Activated CD4-positive, alpha-beta T cell treated with anti-CD3 and anti-CD28 coated beads, Interleukin-2, amount 10 ng/mL, durations not matched to agents 24 days and 14 days (primary cell): ENCODE measurements at regions of chr1 and their contacts with region 1.

Region 1: GRCh38 chr1:236103646-236104218 is 38.6 kb upstream of the GPR137B start:
- DNase-seq: peak; percentile 88
- H3K4me3 Mint-ChIP-seq: no peak overlapping the region
- H3K27ac Mint-ChIP-seq: no peak overlapping the region
- H3K4me1 Mint-ChIP-seq: peaks cover 8% of the 10 kb centered on the region
- H3K27me3 Mint-ChIP-seq: peaks cover 4% of the 10 kb centered on the region

Region 2: DNA sequence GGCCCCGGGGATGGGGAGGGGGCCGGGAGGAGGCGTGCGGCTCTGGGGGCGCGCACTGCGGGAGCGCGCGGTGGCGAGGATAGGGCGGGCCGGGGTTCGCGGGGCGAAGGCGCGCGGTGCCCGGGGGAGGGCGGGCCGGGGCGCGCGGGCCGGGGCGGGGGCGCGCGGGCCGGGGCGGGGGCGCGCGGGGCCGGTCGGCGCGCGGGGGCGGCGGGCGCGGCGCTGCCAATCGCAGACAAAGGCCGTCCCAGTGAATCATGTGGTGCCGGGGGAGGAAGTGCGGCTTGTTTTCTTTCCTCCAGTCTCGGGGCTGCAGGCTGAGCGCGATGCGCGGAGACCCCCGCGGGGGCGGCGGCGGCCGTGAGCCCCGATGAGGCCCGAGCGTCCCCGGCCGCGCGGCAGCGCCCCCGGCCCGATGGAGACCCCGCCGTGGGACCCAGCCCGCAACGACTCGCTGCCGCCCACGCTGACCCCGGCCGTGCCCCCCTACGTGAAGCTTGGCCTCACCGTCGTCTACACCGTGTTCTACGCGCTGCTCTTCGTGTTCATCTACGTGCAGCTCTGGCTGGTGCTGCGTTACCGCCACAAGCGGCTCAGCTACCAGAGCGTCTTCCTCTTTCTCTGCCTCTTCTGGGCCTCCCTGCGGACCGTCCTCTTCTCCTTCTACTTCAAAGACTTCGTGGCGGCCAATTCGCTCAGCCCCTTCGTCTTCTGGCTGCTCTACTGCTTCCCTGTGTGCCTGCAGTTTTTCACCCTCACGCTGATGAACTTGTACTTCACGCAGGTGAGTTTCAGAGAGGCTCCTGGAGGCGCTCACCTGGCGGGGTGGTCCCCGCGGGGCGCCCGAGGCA is 38.7 kb after region 1 on chr1 and contains the start of gene GPR137B:
- intact Hi-C with region 1: loop called (anchors 5 kb)
- DNase-seq: peak; percentile 88
- H3K4me3 Mint-ChIP-seq: peak within 1 kb of the TSS; percentile 92
- H3K27ac Mint-ChIP-seq: peak within 1 kb of the TSS; percentile 82
- H3K4me1 Mint-ChIP-seq: peaks cover 28% of the 10 kb centered on the region
- H3K27me3 Mint-ChIP-seq: peaks cover 37% of the 10 kb centered on the region
- total RNA-seq, gene GPR137B: 6.6 and 7.7 TPM in 2 replicates

Region 3: GRCh38 chr1:236451796-236452373 is 348.2 kb after region 1 on chr1:
- intact Hi-C with region 1: loop called (anchors 5 kb)
- DNase-seq: peak; percentile 82
- H3K4me3 Mint-ChIP-seq: no peak overlapping the region
- H3K27ac Mint-ChIP-seq: no peak overlapping the region
- H3K4me1 Mint-ChIP-seq: no peaks in the 10 kb centered on the region
- H3K27me3 Mint-ChIP-seq: no peaks in the 10 kb centered on the region

Region 4: GRCh38 chr1:236489710-236490377 is 386.1 kb after region 1 on chr1:
- intact Hi-C with region 1: loop called (anchors 1 kb)
- DNase-seq: peak; percentile 64
- H3K4me3 Mint-ChIP-seq: no peak overlapping the region
- H3K27ac Mint-ChIP-seq: no peak overlapping the region
- H3K4me1 Mint-ChIP-seq: peaks cover 13% of the 10 kb centered on the region
- H3K27me3 Mint-ChIP-seq: peaks cover 26% of the 10 kb centered on the region

Region 5: DNA sequence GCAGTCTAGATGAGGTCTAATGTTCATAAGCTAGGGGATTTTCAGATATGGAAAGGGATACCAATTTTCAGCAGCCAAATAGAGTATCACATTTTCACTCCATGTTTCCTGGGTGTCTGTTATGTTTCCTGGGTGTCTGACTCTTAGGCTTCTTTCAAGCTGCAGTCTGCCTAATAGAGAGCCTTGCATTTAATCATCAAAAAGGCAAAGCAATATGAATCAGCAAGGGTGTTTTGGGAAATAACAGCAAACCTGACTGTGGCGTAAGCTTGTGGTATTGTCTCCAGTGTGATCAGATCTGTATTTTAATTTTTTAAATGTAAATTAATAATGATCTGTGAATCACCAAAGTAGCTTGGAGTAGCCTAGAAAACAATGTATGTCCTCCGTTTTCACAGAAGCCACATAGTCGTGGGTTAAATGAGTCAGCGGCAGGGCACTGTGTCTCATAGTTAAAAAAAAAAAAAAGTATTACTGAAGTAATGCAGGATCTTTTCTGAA is 430.5 kb after region 1 on chr1:
- intact Hi-C with region 1: loop called (anchors 5 kb)
- DNase-seq: peak; percentile 68
- H3K4me3 Mint-ChIP-seq: peak overlapping the region; percentile 50
- H3K27ac Mint-ChIP-seq: peak overlapping the region; percentile 90
- H3K4me1 Mint-ChIP-seq: peaks cover 35% of the 10 kb centered on the region
- H3K27me3 Mint-ChIP-seq: no peaks in the 10 kb centered on the region

Region 6: GRCh38 chr1:236868625-236869467 is 765.1 kb after region 1 on chr1:
- intact Hi-C with region 1: loop called (anchors 2 kb)
- DNase-seq: peak; percentile 83
- H3K4me3 Mint-ChIP-seq: no peak overlapping the region
- H3K27ac Mint-ChIP-seq: no peak overlapping the region
- H3K4me1 Mint-ChIP-seq: peaks cover 10% of the 10 kb centered on the region
- H3K27me3 Mint-ChIP-seq: no peaks in the 10 kb centered on the region

Region 7: DNA sequence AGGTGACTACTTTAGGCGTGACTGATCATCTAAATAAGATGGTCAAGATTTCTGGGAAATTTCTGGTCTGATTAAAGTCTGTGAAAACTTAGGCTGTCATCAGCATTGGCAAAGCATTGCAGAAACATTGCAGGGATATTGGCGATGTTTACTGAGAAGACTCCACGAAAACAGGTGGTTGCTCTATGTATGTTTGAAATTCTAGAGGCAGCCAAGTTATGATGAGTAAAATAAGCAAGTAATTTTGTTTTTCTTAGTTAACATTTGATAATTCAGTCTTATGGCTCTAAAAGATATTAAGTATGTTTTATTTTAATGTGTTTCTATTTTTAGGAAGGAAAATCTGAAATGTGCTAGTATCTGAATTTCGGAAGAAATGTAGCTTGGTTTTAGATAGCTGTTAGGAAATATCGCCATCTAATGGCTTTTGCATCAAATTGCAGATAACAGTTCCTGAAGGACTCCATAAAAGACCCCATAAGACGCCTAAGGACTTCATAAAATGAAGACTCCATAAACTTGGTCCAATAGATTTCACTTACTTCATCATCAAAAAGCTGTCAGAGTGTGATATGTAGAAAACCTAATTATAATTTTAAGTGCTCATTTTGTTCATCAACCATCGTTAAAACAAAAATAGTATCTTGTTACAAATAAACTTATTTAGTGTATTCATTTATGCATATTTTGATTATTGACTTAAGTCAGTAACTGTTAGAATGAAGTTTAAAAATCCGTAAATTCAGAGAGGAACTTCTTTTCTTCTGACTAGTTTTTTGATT is 1282.8 kb after region 1 on chr1:
- intact Hi-C with region 1: loop called (anchors 5 kb)
- DNase-seq: no peak
- H3K4me3 Mint-ChIP-seq: no peak overlapping the region
- H3K27ac Mint-ChIP-seq: no peak overlapping the region
- H3K4me1 Mint-ChIP-seq: no peaks in the 10 kb centered on the region
- H3K27me3 Mint-ChIP-seq: peaks cover 3% of the 10 kb centered on the region